ENCODE measurements at regions of chr1 and their contacts with region 1.

Region 1: DNA sequence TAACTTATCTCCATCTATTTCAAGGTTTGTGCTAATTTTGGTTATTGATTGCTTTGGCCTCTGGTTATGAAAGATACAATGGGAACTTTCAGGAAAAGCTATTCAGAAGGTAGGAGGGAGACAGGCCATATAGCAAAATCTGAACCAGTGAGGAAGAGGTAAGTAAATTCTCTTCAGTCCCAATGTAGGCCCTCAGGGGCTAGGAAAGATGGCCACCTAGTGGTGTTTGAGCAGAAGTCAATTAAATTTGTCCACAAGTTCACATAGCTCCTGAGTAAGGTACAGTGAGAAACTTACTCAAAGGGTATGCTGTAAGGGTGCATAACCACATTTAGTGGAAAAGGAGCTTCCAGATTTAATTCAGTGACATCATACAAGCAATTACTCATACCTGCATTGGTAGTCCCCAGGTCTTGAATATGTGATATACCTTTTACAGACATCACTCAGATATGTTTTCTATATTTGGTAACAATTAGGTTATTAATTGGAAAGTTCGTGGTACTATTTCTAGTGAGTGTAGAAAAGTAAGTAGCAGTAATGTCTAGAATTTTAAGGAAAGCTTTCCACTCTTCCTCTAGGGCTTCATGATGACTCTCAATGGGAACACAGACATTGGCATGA is 21.4 kb upstream of the FMO1 start:
- DNase-seq: peak in 1 of 2 donors; percentile 69
- H3K4me3 ChIP-seq: no peak overlapping the region
- H3K27ac ChIP-seq: no peak overlapping the region
- H3K4me1 ChIP-seq: peaks cover under 1 to 22% of the 10 kb centered on the region in 2 donors
- H3K27me3 ChIP-seq: no peaks in the 10 kb centered on the region
- CTCF ChIP-seq: peak; percentile 70 to 85 (median 81)

Region 2: GRCh38 chr1:170967042-170967910 is 259.6 kb before region 1 on chr1:
- intact Hi-C with region 1: loop called (anchors 2 kb)
- DNase-seq: no peak
- H3K4me3 ChIP-seq: no peak overlapping the region
- H3K27ac ChIP-seq: no peak overlapping the region
- H3K4me1 ChIP-seq: no peaks in the 10 kb centered on the region
- H3K27me3 ChIP-seq: no peaks in the 10 kb centered on the region
- CTCF ChIP-seq: peak; percentile 37 to 68 (median 64)

Region 3: GRCh38 chr1:171081314-171081753 is 145.5 kb before region 1 on chr1:
- intact Hi-C with region 1: loop called (anchors 1 kb)
- DNase-seq: no peak
- H3K4me3 ChIP-seq: peak overlapping the region in 1 of 2 donors; percentile 24
- H3K27ac ChIP-seq: peak overlapping the region; percentile 78 to 80
- H3K4me1 ChIP-seq: peaks cover 0 to 10% of the 10 kb centered on the region in 2 donors
- H3K27me3 ChIP-seq: no peaks in the 10 kb centered on the region
- CTCF ChIP-seq: peak; percentile 41 to 56 (median 43)

Region 4: GRCh38 chr1:171107262-171107940 is 119.5 kb before region 1 on chr1:
- intact Hi-C with region 1: loop called (anchors 5 kb)
- DNase-seq: no peak
- H3K4me3 ChIP-seq: no peak overlapping the region
- H3K27ac ChIP-seq: no peak overlapping the region
- H3K4me1 ChIP-seq: peaks cover 0 to 25% of the 10 kb centered on the region in 2 donors
- H3K27me3 ChIP-seq: no peaks in the 10 kb centered on the region
- CTCF ChIP-seq: peak in 1 of 3 experiments; percentile 32

Region 5: GRCh38 chr1:171188388-171189266 is 38.2 kb before region 1 on chr1:
- intact Hi-C with region 1: loop called (anchors 2 kb)
- DNase-seq: peak in 1 of 2 donors; percentile 74
- H3K4me3 ChIP-seq: peak overlapping the region; percentile 54 to 58
- H3K27ac ChIP-seq: peak overlapping the region; percentile 74 to 83
- H3K4me1 ChIP-seq: peaks cover 1 to 6% of the 10 kb centered on the region in 2 donors
- H3K27me3 ChIP-seq: no peaks in the 10 kb centered on the region
- CTCF ChIP-seq: peak; percentile 49 to 80 (median 77)

Region 6: GRCh38 chr1:171329251-171329650 is 102.4 kb after region 1 on chr1:
- intact Hi-C with region 1: no loop called
- DNase-seq: no peak
- H3K4me3 ChIP-seq: no peak overlapping the region
- H3K27ac ChIP-seq: no peak overlapping the region
- H3K4me1 ChIP-seq: no peaks in the 10 kb centered on the region
- H3K27me3 ChIP-seq: no peaks in the 10 kb centered on the region
- CTCF ChIP-seq: no peak